Caco-2 (cell line): ENCODE measurements at regions of chr20 and their contacts with region 1.

Region 1: GRCh38 chr20:56629670-56630478 is 768 bp downstream of the TFAP2C start:
- DNase-seq: peak; percentile 94 to 95
- H3K4me3 ChIP-seq: peak overlapping the region; percentile 75
- H3K4me3 Mint-ChIP-seq: peak overlapping the region; percentile 79
- H3K27ac Mint-ChIP-seq: peak overlapping the region; percentile 64
- H3K4me1 ChIP-seq: peaks cover 6% of the 10 kb centered on the region; the same call in 1 of the 2 replicates
- H3K4me1 Mint-ChIP-seq: peaks cover 6% of the 10 kb centered on the region
- H3K27me3 ChIP-seq: no peaks in the 10 kb centered on the region
- H3K27me3 Mint-ChIP-seq: no peaks in the 10 kb centered on the region
- CTCF ChIP-seq: peak; percentile 95 to 96

Region 2: DNA sequence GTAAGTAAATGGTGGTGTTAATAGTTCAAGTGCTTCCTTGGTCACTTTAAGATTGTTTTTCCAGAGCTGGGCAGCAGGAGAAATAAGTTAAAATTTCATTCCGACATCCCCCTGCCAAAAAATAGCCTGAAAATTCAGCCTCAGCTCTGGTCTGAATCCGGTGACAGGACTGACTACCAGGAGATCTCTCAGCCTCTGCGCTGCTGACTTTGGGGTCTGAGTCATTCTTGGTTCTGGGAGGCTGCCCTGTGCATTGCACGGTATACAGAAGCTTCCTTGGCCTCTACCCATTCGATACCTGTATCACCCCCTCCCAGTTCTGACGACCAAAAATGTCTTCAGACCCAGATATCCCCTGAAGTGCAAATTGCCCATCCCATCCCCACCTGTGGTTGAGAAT is 37.1 kb before region 1 on chr20:
- CTCF ChIA-PET with region 1: interaction called, 3 read pairs
- POLR2A ChIA-PET with region 1: no interaction called
- intact Hi-C with region 1: loop called (anchors 1 kb)
- DNase-seq: no peak
- H3K4me3 ChIP-seq: no peak overlapping the region
- H3K4me3 Mint-ChIP-seq: no peak overlapping the region
- H3K27ac Mint-ChIP-seq: peak overlapping the region; percentile 89
- H3K4me1 ChIP-seq: peaks cover 50% of the 10 kb centered on the region
- H3K4me1 Mint-ChIP-seq: peaks cover 51% of the 10 kb centered on the region
- H3K27me3 ChIP-seq: no peaks in the 10 kb centered on the region
- H3K27me3 Mint-ChIP-seq: no peaks in the 10 kb centered on the region
- CTCF ChIP-seq: no peak

Region 3: DNA sequence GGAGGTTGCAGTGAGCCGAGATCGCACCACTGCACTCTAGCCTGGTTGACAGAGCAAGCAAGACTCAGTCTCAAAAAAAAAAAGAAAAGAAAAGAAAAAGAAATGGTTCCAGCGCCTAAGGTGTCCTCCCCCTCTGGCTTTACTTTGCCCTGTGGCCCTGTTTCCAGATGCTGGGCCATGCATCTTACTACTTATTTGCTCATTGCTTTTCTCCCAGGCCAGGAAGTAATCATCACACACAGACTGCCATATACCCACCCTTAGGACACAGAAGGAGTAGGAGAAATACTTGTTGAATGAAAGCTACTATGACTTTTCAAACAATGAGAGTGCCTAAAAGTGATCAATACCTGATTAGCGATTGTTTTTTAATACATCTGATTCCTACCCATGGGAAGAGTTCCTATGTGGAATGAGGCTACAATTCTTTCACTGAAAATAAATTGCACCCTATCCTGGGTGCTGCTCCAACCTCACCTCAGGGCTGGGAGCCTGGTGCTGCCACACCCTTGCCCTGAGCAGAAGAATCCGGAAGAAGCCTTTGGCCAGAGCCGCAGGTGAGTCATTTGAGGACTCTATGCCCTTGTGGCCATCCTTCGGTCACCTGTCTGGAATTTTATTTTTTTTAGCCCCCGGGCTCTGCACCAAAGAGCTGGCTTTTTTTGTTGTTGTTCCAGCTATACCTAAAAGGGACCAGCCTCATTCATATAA is 23.5 kb before region 1 on chr20:
- CTCF ChIA-PET with region 1: interaction called, 16 read pairs
- POLR2A ChIA-PET with region 1: interaction called, 11 read pairs
- intact Hi-C with region 1: loop called (anchors 1 kb)
- DNase-seq: peak; percentile 94 to 97
- H3K4me3 ChIP-seq: no peak overlapping the region
- H3K4me3 Mint-ChIP-seq: peak overlapping the region; percentile 45
- H3K27ac Mint-ChIP-seq: peak overlapping the region; percentile 94
- H3K4me1 ChIP-seq: peaks cover 63% of the 10 kb centered on the region
- H3K4me1 Mint-ChIP-seq: peaks cover 72% of the 10 kb centered on the region
- H3K27me3 ChIP-seq: no peaks in the 10 kb centered on the region
- H3K27me3 Mint-ChIP-seq: no peaks in the 10 kb centered on the region
- CTCF ChIP-seq: peak in 1 of 2 experiments; percentile 3

Region 4: DNA sequence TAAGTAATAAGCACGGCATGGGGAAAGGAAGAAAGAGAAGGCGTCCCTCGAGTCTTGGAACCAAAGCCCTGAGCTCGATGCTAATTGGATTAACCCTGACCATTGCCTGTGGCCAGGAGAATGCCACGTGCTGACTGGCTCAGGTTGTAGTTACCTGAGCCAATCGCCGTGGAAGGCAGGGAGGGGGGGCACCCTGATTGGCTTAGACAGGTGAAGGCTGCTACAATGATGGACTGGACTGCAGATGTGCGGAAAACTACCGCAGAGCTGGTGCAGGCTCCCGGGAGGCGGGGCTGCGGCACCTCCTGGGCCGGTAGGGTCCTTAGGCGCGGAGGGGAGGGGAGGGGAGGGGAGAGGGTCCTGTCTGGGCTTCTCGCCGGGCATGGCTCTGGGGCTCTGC is 120.6 kb after region 1 on chr20:
- CTCF ChIA-PET with region 1: no interaction called
- POLR2A ChIA-PET with region 1: no interaction called
- intact Hi-C with region 1: loop called (anchors 5 kb)
- DNase-seq: peak; percentile 43 to 82
- H3K4me3 ChIP-seq: no peak overlapping the region
- H3K4me3 Mint-ChIP-seq: no peak overlapping the region
- H3K27ac Mint-ChIP-seq: no peak overlapping the region
- H3K4me1 ChIP-seq: peaks cover 11% of the 10 kb centered on the region; the same call in 1 of the 2 replicates
- H3K4me1 Mint-ChIP-seq: peaks cover 7% of the 10 kb centered on the region
- H3K27me3 ChIP-seq: no peaks in the 10 kb centered on the region
- H3K27me3 Mint-ChIP-seq: peaks cover 2% of the 10 kb centered on the region
- CTCF ChIP-seq: no peak

Region 5: GRCh38 chr20:56974499-56975236 is 344.8 kb after region 1 on chr20:
- CTCF ChIA-PET with region 1: interaction called, 12 read pairs
- POLR2A ChIA-PET with region 1: no interaction called
- intact Hi-C with region 1: loop called (anchors 5 kb)
- DNase-seq: peak; percentile 76 to 81
- H3K4me3 ChIP-seq: no peak overlapping the region
- H3K4me3 Mint-ChIP-seq: no peak overlapping the region
- H3K27ac Mint-ChIP-seq: no peak overlapping the region
- H3K4me1 ChIP-seq: no peaks in the 10 kb centered on the region
- H3K4me1 Mint-ChIP-seq: no peaks in the 10 kb centered on the region
- H3K27me3 ChIP-seq: peaks cover 1% of the 10 kb centered on the region; the same call in 1 of the 2 replicates
- H3K27me3 Mint-ChIP-seq: peaks cover 21% of the 10 kb centered on the region
- CTCF ChIP-seq: peak; percentile 95 to 96